ENCODE measurements at regions of chr10 and their contacts with region 1.

Region 1: GRCh38 chr10:47024399-47025252 is 113.4 kb downstream of the PTPN20 start:
- DNase-seq: no peak
- H3K4me3 ChIP-seq: no peak overlapping the region
- H3K27me3 ChIP-seq: no peaks in the 10 kb centered on the region
- CTCF ChIP-seq: peak; percentile 89

Region 2: DNA sequence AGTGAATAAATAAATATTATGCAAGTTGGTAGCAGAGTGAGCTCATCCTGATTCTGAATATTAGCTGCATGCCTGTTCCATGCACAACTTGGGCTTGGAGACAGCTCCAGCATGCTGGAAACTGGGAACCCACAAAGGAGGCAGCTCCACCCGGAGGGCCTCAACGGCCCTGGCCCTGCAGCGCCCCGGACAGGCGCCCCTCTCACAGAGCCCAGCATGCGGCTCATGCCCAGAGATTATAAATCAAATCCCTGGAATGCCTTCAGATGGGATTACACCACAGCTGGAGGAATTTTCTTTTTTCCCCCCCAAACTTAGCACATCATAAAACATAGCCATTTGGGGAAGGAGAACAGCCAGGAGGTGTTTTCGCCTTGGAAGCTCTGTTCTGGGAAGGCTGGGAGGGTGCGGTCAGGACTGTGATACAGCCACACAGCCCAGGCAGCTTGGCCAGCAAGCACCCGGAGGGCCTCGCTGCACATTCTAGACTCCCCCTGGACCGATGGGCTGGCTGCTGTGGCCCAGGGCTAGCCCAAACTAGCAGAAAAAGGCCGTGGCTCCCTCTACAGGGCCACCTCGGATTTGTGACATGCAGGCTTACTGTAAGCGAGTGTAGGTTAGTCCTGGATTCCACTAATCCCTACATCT is 11.0 kb before region 1 on chr10:
- CTCF ChIA-PET with region 1: interaction called, 20 read pairs
- POLR2A ChIA-PET with region 1: no interaction called
- DNase-seq: no peak
- H3K4me3 ChIP-seq: no peak overlapping the region
- H3K27me3 ChIP-seq: peaks cover 8% of the 10 kb centered on the region
- CTCF ChIP-seq: no peak

Region 3: DNA sequence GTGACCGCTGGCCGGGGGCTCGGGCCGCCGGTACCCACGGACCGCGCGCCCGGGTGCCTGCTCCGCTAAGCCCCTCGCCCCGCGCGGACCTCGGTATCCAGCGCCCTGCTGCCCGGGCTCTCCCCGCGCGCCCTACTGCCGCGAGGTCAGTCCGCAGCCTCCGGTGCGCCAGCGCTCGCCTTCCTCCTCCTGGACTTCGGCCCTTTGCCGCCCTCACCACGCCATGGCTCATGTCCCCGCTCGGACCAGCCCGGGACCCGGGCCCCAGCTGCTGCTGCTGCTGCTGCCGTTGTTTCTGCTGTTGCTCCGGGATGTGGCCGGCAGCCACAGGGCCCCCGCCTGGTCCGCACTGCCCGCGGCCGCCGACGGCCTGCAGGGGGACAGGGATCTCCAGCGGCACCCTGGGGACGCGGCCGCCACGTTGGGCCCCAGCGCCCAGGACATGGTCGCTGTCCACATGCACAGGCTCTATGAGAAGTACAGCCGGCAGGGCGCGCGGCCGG is 275.9 kb after region 1 on chr10:
- CTCF ChIA-PET with region 1: interaction called, 15 read pairs
- POLR2A ChIA-PET with region 1: no interaction called
- DNase-seq: no peak
- H3K4me3 ChIP-seq: no peak overlapping the region
- H3K27me3 ChIP-seq: peaks cover 20% of the 10 kb centered on the region
- CTCF ChIP-seq: no peak